ENCODE measurements at regions of chr3 and their contacts with region 1.

Region 1: DNA sequence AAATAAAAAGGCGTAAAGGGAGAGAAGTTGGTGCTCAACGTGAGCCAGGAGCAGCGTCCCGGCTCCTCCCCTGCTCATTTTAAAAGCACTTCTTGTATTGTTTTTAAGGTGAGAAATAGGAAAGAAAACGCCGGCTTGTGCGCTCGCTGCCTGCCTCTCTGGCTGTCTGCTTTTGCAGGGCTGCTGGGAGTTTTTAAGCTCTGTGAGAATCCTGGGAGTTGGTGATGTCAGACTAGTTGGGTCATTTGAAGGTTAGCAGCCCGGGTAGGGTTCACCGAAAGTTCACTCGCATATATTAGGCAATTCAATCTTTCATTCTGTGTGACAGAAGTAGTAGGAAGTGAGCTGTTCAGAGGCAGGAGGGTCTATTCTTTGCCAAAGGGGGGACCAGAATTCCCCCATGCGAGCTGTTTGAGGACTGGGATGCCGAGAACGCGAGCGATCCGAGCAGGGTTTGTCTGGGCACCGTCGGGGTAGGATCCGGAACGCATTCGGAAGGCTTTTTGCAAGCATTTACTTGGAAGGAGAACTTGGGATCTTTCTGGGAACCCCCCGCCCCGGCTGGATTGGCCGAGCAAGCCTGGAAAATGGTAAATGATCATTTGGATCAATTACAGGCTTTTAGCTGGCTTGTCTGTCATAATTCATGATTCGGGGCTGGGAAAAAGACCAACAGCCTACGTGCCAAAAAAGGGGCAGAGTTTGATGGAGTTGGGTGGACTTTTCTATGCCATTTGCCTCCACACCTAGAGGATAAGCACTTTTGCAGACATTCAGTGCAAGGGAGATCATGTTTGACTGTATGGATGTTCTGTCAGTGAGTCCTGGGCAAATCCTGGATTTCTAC is at the start of gene RARB:
- DNase-seq: peak; percentile 66
- ATAC-seq: peak; percentile 84
- H3K4me3 ChIP-seq: peak within 1 kb of the TSS; percentile 57 to 67 (median 61)
- H3K27ac ChIP-seq: no peak within 1 kb of the TSS
- H3K4me1 ChIP-seq: peaks cover 55% of the 10 kb centered on the region
- H3K27me3 ChIP-seq: peaks cover 0 to 32% of the 10 kb centered on the region in 2 experiments; a peak in 3 of 5 replicates
- CTCF ChIP-seq: no peak
- EP300 ChIP-seq: no peak
- POLR2A ChIP-seq: no peak
- RAD21 ChIP-seq: no peak
- total RNA-seq, gene RARB: not detected in 2 replicates

Region 2: GRCh38 chr3:25313286-25313685 is 114.9 kb before region 1 on chr3:
- CTCF ChIA-PET with region 1: no interaction called
- POLR2A ChIA-PET with region 1: no interaction called
- in situ Hi-C with region 1: no loop called
- intact Hi-C with region 1: no loop called
- DNase-seq: no peak
- ATAC-seq: no peak
- H3K4me3 ChIP-seq: no peak overlapping the region
- H3K27ac ChIP-seq: no peak overlapping the region
- H3K4me1 ChIP-seq: no peaks in the 10 kb centered on the region
- H3K27me3 ChIP-seq: no peaks in the 10 kb centered on the region; a peak in 1 of 5 replicates
- CTCF ChIP-seq: no peak
- EP300 ChIP-seq: no peak
- POLR2A ChIP-seq: no peak
- RAD21 ChIP-seq: no peak

Region 3: DNA sequence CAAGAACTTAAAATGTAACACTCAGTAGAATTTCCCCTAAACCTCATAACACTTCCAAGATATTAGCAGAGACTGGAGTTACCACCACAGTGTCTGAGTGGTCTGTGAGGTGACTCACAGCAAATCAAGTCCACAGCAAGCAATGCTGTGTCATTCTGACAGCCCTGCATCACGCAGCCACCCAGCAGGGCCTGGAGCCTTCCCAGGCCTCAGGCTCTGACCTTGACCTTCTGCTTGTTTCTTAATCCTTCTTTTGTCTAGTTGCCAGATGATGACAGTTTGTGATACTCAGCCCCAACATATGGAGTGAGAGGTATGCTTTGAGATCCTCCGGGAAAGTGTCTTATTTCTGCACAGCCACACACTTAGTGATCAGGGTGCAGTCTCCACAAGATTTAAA is 154.1 kb after region 1 on chr3:
- CTCF ChIA-PET with region 1: no interaction called
- POLR2A ChIA-PET with region 1: no interaction called
- in situ Hi-C with region 1: loop called (anchors 10 kb)
- intact Hi-C with region 1: no loop called
- DNase-seq: peak; percentile 69
- ATAC-seq: peak; percentile 90
- H3K4me3 ChIP-seq: no peak overlapping the region
- H3K27ac ChIP-seq: no peak overlapping the region
- H3K4me1 ChIP-seq: peaks cover 25% of the 10 kb centered on the region
- H3K27me3 ChIP-seq: no peaks in the 10 kb centered on the region
- CTCF ChIP-seq: no peak
- EP300 ChIP-seq: peak in 1 of 2 experiments; percentile 57; a peak in 2 of 4 replicates
- POLR2A ChIP-seq: no peak
- RAD21 ChIP-seq: no peak

Measured in HepG2 (cell line).